CD14-positive monocyte (primary cell): ENCODE measurements at regions of chr12 and their contacts with region 1.

Region 1: GRCh38 chr12:46372544-46373110 is at the start of gene SLC38A2:
- DNase-seq: peak; percentile 91 to 94 (median 93)
- H3K4me3 ChIP-seq: peak within 1 kb of the TSS; percentile 71 to 99 (median 97)
- H3K4me3 Mint-ChIP-seq: peak within 1 kb of the TSS; percentile 97
- H3K27ac ChIP-seq: peak within 1 kb of the TSS; percentile 98 to 99
- H3K27ac Mint-ChIP-seq: peak within 1 kb of the TSS; percentile 98 to 99 (median 98)
- H3K4me1 ChIP-seq: peaks cover 39 to 49% of the 10 kb centered on the region in 2 donors
- H3K4me1 Mint-ChIP-seq: peaks cover 45% of the 10 kb centered on the region
- H3K27me3 ChIP-seq: no peaks in the 10 kb centered on the region
- H3K27me3 Mint-ChIP-seq: peaks cover 0 to 10% (median 3%) of the 10 kb centered on the region in 3 donors
- CTCF ChIP-seq: no peak
- polyA plus RNA-seq, gene SLC38A2: 33.8 to 116 (median 48.7) TPM

Region 2: DNA sequence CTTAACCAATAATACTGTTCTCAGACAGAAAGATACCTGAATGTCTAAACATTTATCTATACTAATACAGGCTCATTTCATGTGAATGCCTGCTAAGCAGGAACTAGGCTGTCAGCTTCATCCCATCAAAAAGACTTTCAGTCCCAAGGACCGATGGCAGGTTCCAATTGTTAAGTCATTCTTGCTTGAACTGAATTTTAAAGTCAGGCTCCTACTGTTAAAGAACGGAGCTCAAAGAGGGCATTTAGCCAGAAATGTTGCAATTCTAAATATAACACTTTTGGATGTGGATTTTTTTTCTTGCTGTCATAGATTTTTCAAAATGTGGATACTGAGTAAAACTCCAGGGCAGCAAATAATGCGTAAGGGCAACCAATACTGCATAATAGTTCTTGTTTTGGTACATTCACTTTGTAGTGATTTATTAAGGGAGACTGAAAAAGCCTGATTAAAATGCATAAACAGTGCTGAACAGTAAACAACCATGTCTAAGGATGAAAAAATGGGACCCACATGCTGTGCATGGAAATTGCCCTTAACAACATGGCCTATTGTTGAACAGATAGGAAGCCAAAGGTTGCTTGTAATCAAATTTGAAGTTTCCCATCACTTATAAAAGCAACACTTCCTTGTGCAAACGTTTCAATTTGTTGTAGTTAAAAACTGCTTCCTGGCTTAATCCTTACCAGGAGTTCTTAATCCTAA is 1283.1 kb before region 1 on chr12:
- intact Hi-C with region 1: no loop called
- DNase-seq: no peak
- H3K4me3 ChIP-seq: no peak overlapping the region
- H3K4me3 Mint-ChIP-seq: no peak overlapping the region
- H3K27ac ChIP-seq: no peak overlapping the region
- H3K27ac Mint-ChIP-seq: no peak overlapping the region
- H3K4me1 ChIP-seq: no peaks in the 10 kb centered on the region
- H3K4me1 Mint-ChIP-seq: no peaks in the 10 kb centered on the region
- H3K27me3 ChIP-seq: no peaks in the 10 kb centered on the region
- H3K27me3 Mint-ChIP-seq: peaks cover 2 to 4% (median 2%) of the 10 kb centered on the region in 3 donors
- CTCF ChIP-seq: no peak

Region 3: DNA sequence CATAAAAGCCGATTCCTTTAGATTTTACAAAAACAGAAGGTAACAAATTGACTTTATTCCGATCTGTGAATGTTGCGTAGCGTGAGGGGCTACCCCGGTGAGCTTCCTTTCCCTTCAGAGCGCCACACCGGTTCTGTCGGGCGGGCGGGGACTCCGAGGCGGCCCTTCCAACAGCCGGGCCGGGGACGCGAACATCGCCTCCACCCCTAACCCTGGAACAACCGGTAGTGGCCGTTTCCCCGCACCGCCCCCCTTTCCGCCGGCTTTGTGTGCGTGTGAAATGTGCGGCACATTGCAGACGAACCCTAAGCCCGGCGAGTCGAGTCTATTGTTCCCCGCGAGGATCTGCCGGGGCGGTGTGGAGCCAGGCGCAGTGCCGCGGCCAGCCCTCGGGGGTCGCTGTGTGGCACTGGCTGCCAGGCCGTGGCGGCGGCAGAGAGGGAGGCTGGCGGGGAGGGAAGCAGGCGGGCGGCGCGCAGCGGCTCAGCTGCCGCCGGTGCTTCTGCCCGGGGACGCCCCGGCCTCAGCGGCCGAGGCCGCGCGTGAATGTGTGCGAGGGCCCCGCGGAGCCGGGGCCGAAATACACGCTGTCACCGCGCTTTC is 643.9 kb before region 1 on chr12:
- intact Hi-C with region 1: loop called in 1 of 2 experiments (anchors 10 kb)
- DNase-seq: peak; percentile 90 to 96 (median 93)
- H3K4me3 ChIP-seq: peak overlapping the region; percentile 65 to 98 (median 73)
- H3K4me3 Mint-ChIP-seq: peak overlapping the region; percentile 98 to 99
- H3K27ac ChIP-seq: peak overlapping the region; percentile 98
- H3K27ac Mint-ChIP-seq: peak overlapping the region; percentile 98 to 99 (median 98)
- H3K4me1 ChIP-seq: peaks cover 29 to 58% of the 10 kb centered on the region in 2 donors
- H3K4me1 Mint-ChIP-seq: peaks cover 39% of the 10 kb centered on the region
- H3K27me3 ChIP-seq: no peaks in the 10 kb centered on the region
- H3K27me3 Mint-ChIP-seq: no peaks in the 10 kb centered on the region
- CTCF ChIP-seq: peak; percentile 98

Region 4: GRCh38 chr12:46209914-46210872 is 162.4 kb before region 1 on chr12:
- intact Hi-C with region 1: loop called in 1 of 2 experiments (anchors 10 kb)
- DNase-seq: no peak
- H3K4me3 ChIP-seq: no peak overlapping the region
- H3K4me3 Mint-ChIP-seq: no peak overlapping the region
- H3K27ac ChIP-seq: no peak overlapping the region
- H3K27ac Mint-ChIP-seq: peak overlapping the region in 1 of 7 donors; percentile 11
- H3K4me1 ChIP-seq: peaks cover 7% of the 10 kb centered on the region in 2 donors
- H3K4me1 Mint-ChIP-seq: peaks cover 21% of the 10 kb centered on the region
- H3K27me3 ChIP-seq: no peaks in the 10 kb centered on the region
- H3K27me3 Mint-ChIP-seq: peaks cover 3 to 12% (median 6%) of the 10 kb centered on the region in 3 donors
- CTCF ChIP-seq: no peak

Region 5: DNA sequence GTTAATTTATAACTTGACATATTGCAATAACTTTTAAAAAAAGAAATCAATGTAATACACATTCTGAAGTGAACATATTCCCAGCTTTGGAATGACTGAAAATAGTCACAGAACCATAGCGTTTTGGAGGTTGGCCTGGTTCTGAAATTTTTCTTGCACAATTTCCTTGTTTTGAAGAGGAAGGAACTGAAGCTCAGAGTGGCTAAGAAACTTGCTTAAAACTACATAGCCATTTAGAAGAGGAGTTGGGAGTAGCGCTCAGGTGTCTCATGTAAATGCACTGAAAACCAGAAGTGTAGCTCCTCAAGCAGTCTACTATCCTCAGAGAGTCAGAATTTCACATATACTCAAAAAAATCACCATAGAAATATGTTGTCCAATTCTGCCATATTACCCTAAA is 145.0 kb before region 1 on chr12:
- intact Hi-C with region 1: no loop called
- DNase-seq: peak; percentile 17 to 68 (median 51)
- H3K4me3 ChIP-seq: peak overlapping the region in 1 of 3 experiments; percentile 32
- H3K4me3 Mint-ChIP-seq: no peak overlapping the region
- H3K27ac ChIP-seq: no peak overlapping the region
- H3K27ac Mint-ChIP-seq: no peak overlapping the region
- H3K4me1 ChIP-seq: peaks cover 34 to 39% of the 10 kb centered on the region in 2 donors
- H3K4me1 Mint-ChIP-seq: peaks cover 41% of the 10 kb centered on the region
- H3K27me3 ChIP-seq: no peaks in the 10 kb centered on the region
- H3K27me3 Mint-ChIP-seq: no peaks in the 10 kb centered on the region
- CTCF ChIP-seq: no peak

Region 6: DNA sequence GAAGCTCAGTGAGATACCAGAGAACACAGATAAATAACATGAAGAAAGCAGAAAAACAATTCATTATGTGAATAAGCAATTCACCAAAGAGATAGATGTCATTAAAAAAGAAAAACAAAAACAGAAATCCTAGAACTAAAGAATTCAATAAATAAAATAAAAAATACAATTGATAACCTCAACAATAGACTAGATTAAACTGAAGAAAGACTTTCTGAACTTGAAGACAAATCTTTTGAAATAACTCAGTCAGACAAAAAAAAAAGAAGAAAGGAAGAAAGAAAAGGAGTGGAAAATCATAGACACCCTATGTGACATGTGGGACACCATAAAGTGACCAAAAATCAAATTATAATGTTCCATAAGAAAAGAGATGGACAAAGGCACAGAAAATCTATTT is 89.8 kb before region 1 on chr12:
- intact Hi-C with region 1: no loop called
- DNase-seq: no peak
- H3K4me3 ChIP-seq: no peak overlapping the region
- H3K4me3 Mint-ChIP-seq: no peak overlapping the region
- H3K27ac ChIP-seq: no peak overlapping the region
- H3K27ac Mint-ChIP-seq: no peak overlapping the region
- H3K4me1 ChIP-seq: no peaks in the 10 kb centered on the region
- H3K4me1 Mint-ChIP-seq: no peaks in the 10 kb centered on the region
- H3K27me3 ChIP-seq: no peaks in the 10 kb centered on the region
- H3K27me3 Mint-ChIP-seq: no peaks in the 10 kb centered on the region
- CTCF ChIP-seq: no peak

Region 7: DNA sequence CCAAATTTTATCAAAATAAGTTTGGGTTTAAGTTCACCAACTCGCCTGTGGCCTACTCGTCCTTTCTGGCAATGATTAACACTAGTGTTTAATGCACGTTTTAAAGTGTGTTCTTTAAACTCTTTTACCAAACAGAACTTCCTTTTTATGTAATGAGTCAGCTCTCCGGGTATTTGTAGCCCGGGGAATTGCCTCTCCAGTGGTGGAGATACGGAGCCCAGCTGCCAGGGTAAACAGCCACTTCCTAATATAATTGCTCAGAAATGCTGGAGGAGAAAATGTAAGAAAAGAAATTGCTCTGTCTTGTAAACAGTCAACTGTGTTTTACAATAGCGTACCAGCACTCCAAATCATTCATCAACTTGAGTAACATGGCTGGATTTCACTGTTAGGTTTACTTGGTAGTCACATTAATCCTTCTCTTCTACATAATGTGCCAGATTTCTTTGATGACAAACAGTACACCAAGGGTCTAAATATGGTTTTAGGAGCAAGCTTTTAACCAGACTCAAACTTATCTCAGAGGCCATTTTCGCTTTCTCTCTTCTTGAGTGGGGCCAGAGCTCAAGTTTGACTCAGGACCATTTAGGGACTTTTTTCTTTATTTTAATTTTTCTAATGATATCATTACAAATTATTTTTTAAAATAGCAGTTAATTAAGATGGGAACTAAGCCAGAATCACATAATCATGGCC is 101.2 kb after region 1 on chr12:
- intact Hi-C with region 1: loop called in 1 of 2 experiments (anchors 5 kb)
- DNase-seq: peak; percentile 71 to 89 (median 87)
- H3K4me3 ChIP-seq: peak overlapping the region in 1 of 3 experiments; percentile 54
- H3K4me3 Mint-ChIP-seq: peak overlapping the region; percentile 6 to 75
- H3K27ac ChIP-seq: peak overlapping the region; percentile 1 to 86
- H3K27ac Mint-ChIP-seq: peak overlapping the region; percentile 70 to 92 (median 86)
- H3K4me1 ChIP-seq: peaks cover 24 to 30% of the 10 kb centered on the region in 2 donors
- H3K4me1 Mint-ChIP-seq: peaks cover 39% of the 10 kb centered on the region
- H3K27me3 ChIP-seq: no peaks in the 10 kb centered on the region
- H3K27me3 Mint-ChIP-seq: no peaks in the 10 kb centered on the region
- CTCF ChIP-seq: no peak

Region 8: DNA sequence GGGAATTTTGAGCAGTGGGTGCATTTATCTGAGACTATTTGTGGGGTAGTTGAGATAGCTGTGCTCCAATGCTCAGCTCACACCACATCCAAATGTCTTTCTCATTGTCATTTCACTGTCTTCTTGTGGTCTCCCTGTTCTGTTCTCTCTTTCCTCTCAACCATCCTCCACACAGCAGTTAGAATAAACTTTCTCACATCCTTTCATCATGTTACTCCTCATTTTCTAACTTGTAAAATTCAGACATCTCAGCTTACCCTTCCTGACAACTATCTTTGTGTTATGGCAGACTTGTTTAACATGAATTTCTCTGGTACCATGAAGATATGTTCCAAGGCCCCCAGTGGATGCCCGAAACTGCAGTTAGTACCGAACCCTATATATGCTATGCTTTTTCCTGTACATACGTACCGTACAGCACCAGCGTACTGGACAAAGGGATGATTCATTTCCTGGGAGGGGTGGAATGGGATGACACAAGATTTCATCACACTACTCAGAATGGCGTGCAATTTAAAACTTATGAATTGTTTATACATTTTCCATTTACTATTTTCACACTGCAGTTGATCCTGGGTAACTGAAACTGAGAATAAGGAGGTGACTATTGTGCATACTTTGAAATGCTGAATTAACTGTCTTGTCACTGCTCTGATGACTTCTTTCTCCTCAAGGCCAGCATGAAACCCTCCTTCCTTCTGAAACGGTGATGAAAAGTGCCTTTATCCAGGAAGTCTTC is 177.1 kb after region 1 on chr12:
- intact Hi-C with region 1: loop called in 1 of 2 experiments (anchors 5 kb)
- DNase-seq: peak; percentile 84 to 94 (median 90)
- H3K4me3 ChIP-seq: peak overlapping the region; percentile 11 to 53 (median 38)
- H3K4me3 Mint-ChIP-seq: peak overlapping the region; percentile 63 to 83
- H3K27ac ChIP-seq: peak overlapping the region; percentile 14 to 79
- H3K27ac Mint-ChIP-seq: peak overlapping the region; percentile 85 to 96 (median 90)
- H3K4me1 ChIP-seq: peaks cover 37 to 47% of the 10 kb centered on the region in 2 donors
- H3K4me1 Mint-ChIP-seq: peaks cover 62% of the 10 kb centered on the region
- H3K27me3 ChIP-seq: no peaks in the 10 kb centered on the region
- H3K27me3 Mint-ChIP-seq: peaks cover 0 to 2% (median 0%) of the 10 kb centered on the region in 3 donors
- CTCF ChIP-seq: no peak

Region 9: DNA sequence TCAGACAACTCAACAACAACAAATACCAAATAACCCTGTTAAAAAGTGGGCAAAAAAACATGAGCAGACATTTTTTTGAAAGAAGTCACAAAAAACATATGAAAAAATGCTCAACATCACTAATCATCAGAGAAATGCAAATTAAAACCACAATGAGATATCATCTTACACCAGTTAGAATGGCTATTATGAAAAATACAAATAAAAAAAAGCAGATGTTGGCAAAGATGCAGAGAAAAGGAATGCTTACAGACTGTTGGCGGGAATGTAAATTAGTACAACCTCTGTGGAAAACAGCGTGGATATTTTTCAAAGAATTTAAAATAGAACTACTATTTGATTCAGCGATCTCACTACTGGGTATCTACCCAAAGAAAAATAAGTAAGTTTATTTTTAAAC is 339.1 kb after region 1 on chr12:
- intact Hi-C with region 1: no loop called
- DNase-seq: no peak
- H3K4me3 ChIP-seq: no peak overlapping the region
- H3K4me3 Mint-ChIP-seq: no peak overlapping the region
- H3K27ac ChIP-seq: no peak overlapping the region
- H3K27ac Mint-ChIP-seq: no peak overlapping the region
- H3K4me1 ChIP-seq: no peaks in the 10 kb centered on the region
- H3K4me1 Mint-ChIP-seq: no peaks in the 10 kb centered on the region
- H3K27me3 ChIP-seq: no peaks in the 10 kb centered on the region
- H3K27me3 Mint-ChIP-seq: no peaks in the 10 kb centered on the region
- CTCF ChIP-seq: no peak